ENCODE measurements at regions of chr6 and their contacts with region 1.

Region 1: DNA sequence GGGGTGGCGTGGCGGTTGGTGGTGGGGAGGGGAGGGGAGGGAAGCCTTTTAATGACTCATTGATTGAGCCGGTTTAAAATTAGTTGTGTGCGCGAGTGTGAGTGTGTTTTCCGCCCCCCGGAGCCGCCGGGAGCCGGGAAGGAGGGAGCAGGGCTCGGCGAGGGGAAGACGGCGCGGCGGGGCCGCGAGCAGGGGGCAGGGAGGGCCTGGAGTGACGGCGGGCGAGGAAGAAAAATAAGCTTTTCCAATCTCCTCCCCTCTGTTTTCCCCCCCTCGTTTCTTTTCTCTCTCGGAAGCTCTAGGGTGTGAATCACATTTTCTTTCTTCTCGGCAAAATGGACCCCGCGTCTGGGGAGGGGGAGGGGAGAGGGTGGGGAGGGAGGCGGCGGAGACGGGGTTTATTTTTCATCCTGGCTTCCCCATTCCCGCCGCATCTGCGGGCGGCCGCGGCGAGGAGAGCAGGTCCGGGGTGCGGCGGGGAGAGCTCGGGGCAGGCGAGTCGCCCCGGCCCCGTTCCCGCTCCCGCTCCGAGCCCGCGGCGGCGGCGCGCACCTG is 847 bp downstream of the BICRAL start:
- DNase-seq: no peak
- H3K4me3 ChIP-seq: peak overlapping the region; percentile 78 to 94 (median 88)
- H3K27ac ChIP-seq: peak overlapping the region; percentile 99 to 100 (median 99)
- H3K4me1 ChIP-seq: peaks cover 0 to 73% (median 11%) of the 10 kb centered on the region in 3 donors
- H3K27me3 ChIP-seq: no peaks in the 10 kb centered on the region
- CTCF ChIP-seq: no peak
- POLR2A ChIP-seq: peak in 3 of 4 donors; percentile 28 to 91 (median 82)

Region 2: DNA sequence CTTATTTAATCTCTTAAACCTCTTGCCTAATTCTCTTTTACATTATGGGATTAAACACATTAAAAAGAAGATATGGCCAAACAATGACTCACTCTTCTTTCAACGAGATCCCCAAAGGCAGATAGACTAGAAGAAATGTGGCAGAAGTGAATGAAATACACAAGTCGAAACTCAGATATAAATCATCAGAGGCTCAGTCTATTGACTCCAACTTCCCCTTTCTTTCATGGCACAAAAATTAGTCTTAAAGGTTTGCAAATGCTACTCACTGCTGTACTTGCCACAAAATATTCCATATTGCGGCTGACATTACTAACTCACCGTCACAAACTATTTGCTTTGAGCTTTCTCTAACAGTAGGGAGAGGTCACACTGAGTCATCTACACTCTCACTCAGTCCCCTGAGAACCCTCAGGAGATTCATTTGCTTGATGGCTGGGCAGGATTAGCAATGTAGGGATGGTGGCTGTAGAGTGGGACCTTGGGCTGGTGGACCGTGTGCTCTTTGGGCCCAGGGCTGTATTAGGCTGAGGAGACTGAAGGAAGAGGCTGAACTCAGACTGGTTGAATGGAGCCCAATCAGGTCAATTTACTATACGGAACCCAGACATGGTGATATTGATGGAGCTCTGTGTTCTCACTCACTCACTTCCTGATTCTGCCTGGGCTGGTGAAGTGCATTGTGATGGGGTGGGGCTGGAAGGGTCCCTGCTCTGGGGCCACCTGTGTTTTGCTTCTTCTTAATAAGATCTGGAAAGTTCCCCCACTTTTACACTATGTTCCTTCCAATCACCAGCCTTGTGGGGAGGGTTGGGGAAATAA is 261.7 kb before region 1 on chr6:
- intact Hi-C with region 1: no loop called
- DNase-seq: no peak
- H3K4me3 ChIP-seq: no peak overlapping the region
- H3K27ac ChIP-seq: peak overlapping the region in 1 of 4 donors; percentile 15
- H3K4me1 ChIP-seq: peaks cover 0 to 19% (median 8%) of the 10 kb centered on the region in 3 donors
- H3K27me3 ChIP-seq: peaks cover 0 to 80% (median 0%) of the 10 kb centered on the region in 4 donors
- CTCF ChIP-seq: no peak
- POLR2A ChIP-seq: no peak

Region 3: GRCh38 chr6:42745707-42746462 is 36.8 kb before region 1 on chr6 and contains the start of gene TBCC:
- intact Hi-C with region 1: loop called (anchors 5 kb)
- DNase-seq: peak; percentile 95
- H3K4me3 ChIP-seq: peak within 1 kb of the TSS; percentile 73 to 99 (median 77)
- H3K27ac ChIP-seq: peak within 1 kb of the TSS; percentile 94 to 99 (median 96)
- H3K4me1 ChIP-seq: peaks cover 20 to 55% (median 45%) of the 10 kb centered on the region in 3 donors
- H3K27me3 ChIP-seq: no peaks in the 10 kb centered on the region
- CTCF ChIP-seq: peak in 1 of 6 experiments; percentile 21
- POLR2A ChIP-seq: peak in 3 of 4 donors; percentile 78 to 98 (median 96)
- total RNA-seq, gene TBCC: 16.2 to 32.9 (median 24.8) TPM

Region 4: GRCh38 chr6:42901536-42901957 is 118.8 kb after region 1 on chr6:
- intact Hi-C with region 1: no loop called
- DNase-seq: peak; percentile 18
- H3K4me3 ChIP-seq: peak overlapping the region in 3 of 4 donors; percentile 22 to 51 (median 27)
- H3K27ac ChIP-seq: peak overlapping the region in 2 of 4 donors; percentile 37 to 43
- H3K4me1 ChIP-seq: peaks cover 4 to 34% (median 4%) of the 10 kb centered on the region in 3 donors
- H3K27me3 ChIP-seq: no peaks in the 10 kb centered on the region
- CTCF ChIP-seq: peak; percentile 81 to 96 (median 94)
- POLR2A ChIP-seq: no peak

Region 5: DNA sequence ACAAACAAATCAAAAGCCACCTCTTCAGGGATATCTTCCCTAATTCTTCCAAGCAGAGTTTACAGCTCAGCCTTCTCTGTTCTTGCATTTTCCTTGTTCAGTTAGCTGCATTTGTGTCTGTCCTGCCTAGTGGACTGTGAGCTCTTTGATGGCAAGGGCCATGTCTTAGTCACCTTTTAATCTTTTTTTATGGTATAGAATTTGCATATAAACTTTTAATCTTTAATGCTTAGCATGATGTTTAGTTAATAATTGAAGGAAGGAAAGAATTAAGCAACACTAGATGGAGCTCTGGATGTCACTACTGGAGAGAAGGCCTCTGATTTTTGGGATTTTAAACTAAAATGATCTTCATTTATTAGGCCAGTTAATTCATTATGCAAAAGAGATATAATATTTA is 213.8 kb after region 1 on chr6:
- intact Hi-C with region 1: no loop called
- DNase-seq: no peak
- H3K4me3 ChIP-seq: no peak overlapping the region
- H3K27ac ChIP-seq: no peak overlapping the region
- H3K4me1 ChIP-seq: no peaks in the 10 kb centered on the region
- H3K27me3 ChIP-seq: no peaks in the 10 kb centered on the region
- CTCF ChIP-seq: no peak
- POLR2A ChIP-seq: no peak

Measured in esophagus squamous epithelium (tissue), 5 donors.